Activated CD4-positive, alpha-beta memory T cell treated with anti-CD3 and anti-CD28 coated beads for 36 hours (primary cell): ENCODE measurements at regions of chr1 and their contacts with region 1.

Region 1: DNA sequence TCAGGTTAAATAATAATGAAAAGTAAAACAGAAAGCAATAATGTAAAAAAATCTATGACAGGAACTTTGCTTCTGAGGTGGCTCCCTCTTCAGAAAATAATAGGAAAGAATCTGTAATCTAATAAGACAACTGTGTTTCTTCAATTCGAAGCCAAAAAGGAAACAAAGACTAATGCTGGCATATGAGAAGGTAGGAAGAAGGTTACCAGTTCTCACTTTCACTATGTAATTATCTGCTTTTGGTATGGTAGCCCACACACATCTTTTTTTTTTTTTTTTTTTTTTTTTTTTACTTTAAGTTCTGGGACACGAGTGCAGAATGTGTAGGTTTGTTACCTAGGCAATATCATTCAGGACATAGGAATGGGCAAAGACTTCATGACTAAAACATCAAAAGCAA is 47.1 kb downstream of the COP1 start:
- DNase-seq: no peak
- H3K4me3 Mint-ChIP-seq: peak overlapping the region; percentile 36
- H3K27ac Mint-ChIP-seq: peak overlapping the region; percentile 83
- H3K4me1 Mint-ChIP-seq: peaks cover 44% of the 10 kb centered on the region
- H3K27me3 Mint-ChIP-seq: no peaks in the 10 kb centered on the region

Region 2: DNA sequence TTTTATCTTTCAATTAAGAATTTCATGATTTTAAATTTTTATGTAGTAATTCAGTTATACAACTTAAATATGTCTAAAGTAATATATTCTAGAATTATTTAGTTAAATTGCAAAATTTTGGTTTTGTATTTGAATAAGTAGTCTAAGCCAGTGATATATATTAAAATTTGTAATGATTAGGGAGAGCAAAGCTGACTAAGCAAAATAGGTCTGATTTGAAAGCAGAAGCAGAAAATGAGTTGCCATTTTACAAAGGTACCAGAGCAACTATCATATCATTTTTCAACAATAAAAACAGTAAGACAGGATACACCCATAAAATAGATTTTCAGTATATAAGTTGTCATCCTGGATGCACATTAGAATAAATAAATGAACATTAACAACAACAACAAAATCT is 130.8 kb before region 1 on chr1:
- CTCF ChIA-PET with region 1: no interaction called
- POLR2A ChIA-PET with region 1: no interaction called
- intact Hi-C with region 1: loop called (anchors 5 kb)
- DNase-seq: no peak
- H3K4me3 Mint-ChIP-seq: no peak overlapping the region
- H3K27ac Mint-ChIP-seq: no peak overlapping the region
- H3K4me1 Mint-ChIP-seq: peaks cover 16% of the 10 kb centered on the region
- H3K27me3 Mint-ChIP-seq: no peaks in the 10 kb centered on the region

Region 3: GRCh38 chr1:176177764-176178163 is 17.8 kb after region 1 on chr1:
- CTCF ChIA-PET with region 1: no interaction called
- POLR2A ChIA-PET with region 1: no interaction called
- intact Hi-C with region 1: loop called (anchors 1 kb)
- DNase-seq: no peak
- H3K4me3 Mint-ChIP-seq: peak overlapping the region; percentile 26
- H3K27ac Mint-ChIP-seq: peak overlapping the region; percentile 68
- H3K4me1 Mint-ChIP-seq: peaks cover 37% of the 10 kb centered on the region
- H3K27me3 Mint-ChIP-seq: no peaks in the 10 kb centered on the region

Region 4: DNA sequence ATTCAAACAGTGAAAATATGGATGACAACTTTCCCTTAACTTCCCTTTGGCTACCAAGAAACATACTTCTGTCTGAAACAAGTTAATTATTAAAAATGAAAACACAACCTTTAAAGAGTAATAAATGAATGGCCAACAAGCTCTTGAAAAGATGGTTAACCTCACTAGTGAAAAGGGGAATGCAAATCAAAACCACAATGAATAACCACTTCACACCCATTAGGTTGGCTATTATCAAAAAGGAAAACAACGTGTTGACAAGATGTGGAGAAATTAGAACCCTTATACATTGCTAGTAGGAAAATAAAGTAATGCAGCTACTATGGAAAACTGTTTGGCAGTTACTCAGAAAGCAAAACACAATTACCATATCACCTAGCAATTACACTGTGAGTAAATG is 33.0 kb after region 1 on chr1:
- CTCF ChIA-PET with region 1: interaction called, 3 read pairs
- POLR2A ChIA-PET with region 1: no interaction called
- intact Hi-C with region 1: loop called (anchors 1 kb)
- DNase-seq: no peak
- H3K4me3 Mint-ChIP-seq: no peak overlapping the region
- H3K27ac Mint-ChIP-seq: no peak overlapping the region
- H3K4me1 Mint-ChIP-seq: peaks cover 74% of the 10 kb centered on the region
- H3K27me3 Mint-ChIP-seq: no peaks in the 10 kb centered on the region

Region 5: GRCh38 chr1:176325664-176326063 is 165.7 kb after region 1 on chr1:
- CTCF ChIA-PET with region 1: no interaction called
- POLR2A ChIA-PET with region 1: no interaction called
- intact Hi-C with region 1: no loop called
- DNase-seq: no peak
- H3K4me3 Mint-ChIP-seq: no peak overlapping the region
- H3K27ac Mint-ChIP-seq: no peak overlapping the region
- H3K4me1 Mint-ChIP-seq: no peaks in the 10 kb centered on the region
- H3K27me3 Mint-ChIP-seq: peaks cover 8% of the 10 kb centered on the region